ENCODE measurements at regions of chr2 and their contacts with region 1.

Region 1: GRCh38 chr2:113390124-113390849 is 47.2 kb upstream of the ZNG1B start:
- DNase-seq: peak; percentile 33
- ATAC-seq: peak; percentile 95
- H3K4me3 Mint-ChIP-seq: peak overlapping the region; percentile 50
- H3K27ac Mint-ChIP-seq: peak overlapping the region; percentile 96
- H3K4me1 Mint-ChIP-seq: peaks cover 18% of the 10 kb centered on the region
- H3K27me3 Mint-ChIP-seq: peaks cover 4% of the 10 kb centered on the region
- CTCF ChIP-seq: peak; percentile 83

Region 2: DNA sequence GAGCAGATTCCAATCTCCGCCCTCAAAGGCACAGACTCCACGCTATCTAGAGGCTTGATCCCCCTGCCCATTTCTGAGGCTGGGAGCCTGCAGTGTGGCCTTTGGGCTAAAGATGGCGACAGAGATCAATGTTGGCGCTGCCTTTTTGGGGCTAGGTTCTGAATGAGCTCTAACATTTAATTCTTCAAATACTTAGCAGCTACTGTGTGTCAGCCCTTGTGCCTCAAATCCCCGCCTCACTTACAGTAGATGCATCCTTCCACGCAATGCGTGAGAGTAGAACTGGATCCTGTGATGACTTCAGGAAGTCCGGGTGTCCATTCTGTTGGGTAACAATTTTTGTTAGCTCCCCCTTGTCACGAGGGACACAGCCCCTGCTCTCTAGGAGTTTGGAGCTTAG is 310.2 kb before region 1 on chr2:
- CTCF ChIA-PET with region 1: interaction called, 13 read pairs
- POLR2A ChIA-PET with region 1: no interaction called
- intact Hi-C with region 1: no loop called
- DNase-seq: peak; percentile 31
- ATAC-seq: peak; percentile 82
- H3K4me3 Mint-ChIP-seq: no peak overlapping the region
- H3K27ac Mint-ChIP-seq: no peak overlapping the region
- H3K4me1 Mint-ChIP-seq: no peaks in the 10 kb centered on the region
- H3K27me3 Mint-ChIP-seq: peaks cover 24% of the 10 kb centered on the region
- CTCF ChIP-seq: peak; percentile 23

Region 3: DNA sequence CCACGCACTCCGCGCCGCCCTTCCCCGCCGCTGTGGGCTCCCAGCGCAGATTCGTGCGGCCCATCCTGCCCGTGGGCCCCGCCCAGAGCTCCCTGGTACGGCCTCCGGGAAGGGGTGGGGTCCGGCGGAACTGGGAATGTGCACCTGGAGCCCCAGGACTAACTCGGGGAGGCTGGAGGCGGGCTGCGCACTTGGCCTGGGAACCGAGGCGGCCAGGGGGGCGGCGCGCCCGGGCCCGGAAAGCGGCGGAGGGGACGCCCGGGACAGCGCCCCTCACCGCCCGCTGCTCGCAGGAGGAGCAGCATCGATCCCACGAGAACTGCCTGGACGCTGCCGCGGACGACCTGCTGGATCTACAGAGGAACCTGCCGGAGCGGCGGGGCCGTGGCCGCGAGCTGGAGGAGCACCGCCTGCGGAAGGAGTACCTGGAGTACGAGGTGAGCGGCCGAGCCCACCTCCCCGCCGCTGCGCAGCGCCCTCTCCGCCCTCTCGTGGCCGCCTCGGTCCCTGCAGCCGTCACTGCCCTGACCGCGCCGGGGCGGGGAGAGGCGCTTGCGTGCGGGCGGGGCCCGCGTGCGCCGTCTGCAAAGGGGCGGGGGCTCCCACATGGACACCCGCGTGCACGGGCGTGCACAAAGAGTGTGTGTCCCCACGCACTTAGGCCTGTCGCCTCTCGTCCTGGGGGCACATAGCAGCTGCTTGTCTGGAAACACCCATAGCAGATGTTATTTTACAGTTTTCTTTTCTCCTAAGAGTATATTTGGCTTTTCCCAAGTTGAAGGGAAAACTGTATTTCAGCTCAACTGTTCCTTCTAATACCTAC is 191.3 kb before region 1 on chr2:
- CTCF ChIA-PET with region 1: interaction called, 17 read pairs
- POLR2A ChIA-PET with region 1: interaction called, 7 read pairs
- intact Hi-C with region 1: loop called (anchors 1 kb)
- DNase-seq: peak; percentile 87
- ATAC-seq: peak; percentile 91
- H3K4me3 Mint-ChIP-seq: peak overlapping the region; percentile 76
- H3K27ac Mint-ChIP-seq: no peak overlapping the region
- H3K4me1 Mint-ChIP-seq: peaks cover 7% of the 10 kb centered on the region
- H3K27me3 Mint-ChIP-seq: no peaks in the 10 kb centered on the region
- CTCF ChIP-seq: peak; percentile 44

Region 4: DNA sequence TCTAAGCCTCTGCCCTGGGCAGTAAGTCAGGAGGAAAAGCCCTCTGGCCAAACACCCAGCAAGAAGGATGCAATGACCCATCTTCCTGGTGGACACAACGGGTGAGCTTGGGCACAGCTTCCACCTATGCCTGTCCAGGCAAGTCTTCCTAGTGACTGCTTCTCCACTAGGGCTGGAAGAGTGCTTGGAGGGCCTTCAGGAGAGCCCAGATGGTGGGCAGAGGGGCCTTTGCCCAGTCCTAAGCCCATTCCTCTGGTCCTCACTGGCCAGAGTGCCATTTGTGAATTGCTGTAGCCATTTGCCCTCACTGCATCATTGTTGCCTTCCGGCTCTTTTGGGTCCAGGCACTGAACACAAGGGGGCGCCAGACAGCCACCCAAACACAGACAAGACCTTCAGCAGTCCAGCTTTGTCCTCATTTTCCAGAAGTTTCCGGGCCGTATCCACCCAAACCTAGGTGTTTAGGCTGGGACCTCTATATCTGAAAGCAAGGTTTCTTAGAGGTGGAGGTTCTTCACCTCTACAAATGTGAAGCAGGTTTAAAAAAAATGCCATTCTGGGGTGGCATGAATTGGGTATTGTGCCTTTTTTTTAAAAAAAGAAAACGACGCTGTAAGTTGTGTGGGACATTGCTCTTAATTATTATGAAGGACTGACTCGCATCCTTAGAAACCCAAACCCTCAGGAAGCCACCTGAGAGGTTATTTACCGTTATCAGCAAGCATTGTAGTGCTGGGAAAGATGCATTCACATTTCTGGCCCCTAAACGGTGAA is 141.1 kb before region 1 on chr2:
- CTCF ChIA-PET with region 1: interaction called, 57 read pairs
- POLR2A ChIA-PET with region 1: interaction called, 8 read pairs
- intact Hi-C with region 1: loop called (anchors 1 kb)
- DNase-seq: peak; percentile 64
- ATAC-seq: peak; percentile 86
- H3K4me3 Mint-ChIP-seq: no peak overlapping the region
- H3K27ac Mint-ChIP-seq: no peak overlapping the region
- H3K4me1 Mint-ChIP-seq: peaks cover 11% of the 10 kb centered on the region
- H3K27me3 Mint-ChIP-seq: peaks cover 2% of the 10 kb centered on the region
- CTCF ChIP-seq: peak; percentile 92

Region 5: GRCh38 chr2:113370478-113371091 is 19.7 kb before region 1 on chr2:
- CTCF ChIA-PET with region 1: interaction called, 24 read pairs
- POLR2A ChIA-PET with region 1: interaction called, 4 read pairs
- intact Hi-C with region 1: loop called (anchors 1 kb)
- DNase-seq: peak; percentile 24
- ATAC-seq: peak; percentile 89
- H3K4me3 Mint-ChIP-seq: no peak overlapping the region
- H3K27ac Mint-ChIP-seq: no peak overlapping the region
- H3K4me1 Mint-ChIP-seq: peaks cover 33% of the 10 kb centered on the region
- H3K27me3 Mint-ChIP-seq: no peaks in the 10 kb centered on the region
- CTCF ChIP-seq: no peak

Measured in activated B cell treated with CpG ODN at 0.5 μM for 24 hours (primary cell).